ENCODE measurements at regions of chr16 and their contacts with region 1.

Region 1: DNA sequence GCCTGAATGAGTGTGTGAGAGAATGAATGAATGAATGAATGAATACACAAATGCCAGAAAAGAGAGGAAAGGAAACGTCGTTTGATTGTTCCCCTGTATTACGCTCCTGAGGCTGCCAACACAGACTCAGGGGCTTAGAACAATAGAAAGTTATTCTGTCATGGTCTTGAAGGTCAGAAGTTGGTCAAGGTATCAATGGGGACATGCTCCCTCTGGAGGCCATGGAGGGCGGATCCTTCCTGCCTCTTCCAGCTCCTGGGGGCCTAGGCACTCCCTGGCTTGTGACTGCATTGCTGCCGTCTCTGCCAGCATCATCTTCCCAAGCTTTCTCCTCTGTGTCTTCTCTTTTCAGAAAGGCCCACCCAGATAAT is 1.5 kb upstream of the SLC38A8 start:
- DNase-seq: no peak
- H3K4me3 Mint-ChIP-seq: no peak overlapping the region
- H3K27ac Mint-ChIP-seq: no peak overlapping the region
- H3K4me1 Mint-ChIP-seq: peaks cover 5% of the 10 kb centered on the region
- H3K27me3 Mint-ChIP-seq: peaks cover 24% of the 10 kb centered on the region

Region 2: DNA sequence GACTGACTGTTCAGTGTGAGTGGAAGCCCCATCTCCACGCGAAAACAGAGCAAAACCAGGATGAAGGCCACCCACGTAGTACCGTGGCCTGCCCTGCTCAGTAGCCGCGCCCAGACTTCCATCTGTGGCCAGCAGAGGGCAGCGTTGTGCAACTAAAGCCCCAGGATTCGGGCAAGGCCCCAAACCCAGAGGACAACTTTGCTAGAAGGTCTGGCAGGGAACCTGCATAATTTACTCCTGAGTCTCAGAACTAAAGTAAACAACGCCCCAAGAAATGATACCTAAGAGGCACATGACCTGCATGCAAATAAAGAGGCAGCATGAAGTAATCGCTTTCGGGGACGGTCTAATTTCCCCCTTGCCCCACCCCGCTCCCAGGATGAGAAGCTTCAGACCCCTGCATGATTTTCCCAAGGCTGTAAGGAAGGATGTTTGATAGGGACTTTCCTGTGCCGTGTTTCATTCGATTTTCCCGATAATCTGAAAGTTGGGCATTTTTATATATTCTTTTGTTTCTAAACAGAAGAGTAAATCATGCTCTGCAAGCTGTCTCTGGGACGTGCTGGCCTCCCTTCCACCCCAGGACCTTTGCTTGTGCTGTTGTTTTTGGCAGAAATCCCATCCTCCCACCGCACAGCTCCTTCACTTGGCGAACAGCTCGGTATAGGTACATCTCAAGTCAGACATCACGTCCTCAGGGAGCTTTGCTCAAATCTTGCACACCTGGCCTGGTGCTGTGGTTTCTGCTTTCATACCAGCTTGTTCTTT is 217.8 kb before region 1 on chr16:
- CTCF ChIA-PET with region 1: no interaction called
- intact Hi-C with region 1: loop called (anchors 5 kb)
- DNase-seq: peak; percentile 88
- H3K4me3 Mint-ChIP-seq: no peak overlapping the region
- H3K27ac Mint-ChIP-seq: no peak overlapping the region
- H3K4me1 Mint-ChIP-seq: peaks cover 3% of the 10 kb centered on the region
- H3K27me3 Mint-ChIP-seq: no peaks in the 10 kb centered on the region

Region 3: DNA sequence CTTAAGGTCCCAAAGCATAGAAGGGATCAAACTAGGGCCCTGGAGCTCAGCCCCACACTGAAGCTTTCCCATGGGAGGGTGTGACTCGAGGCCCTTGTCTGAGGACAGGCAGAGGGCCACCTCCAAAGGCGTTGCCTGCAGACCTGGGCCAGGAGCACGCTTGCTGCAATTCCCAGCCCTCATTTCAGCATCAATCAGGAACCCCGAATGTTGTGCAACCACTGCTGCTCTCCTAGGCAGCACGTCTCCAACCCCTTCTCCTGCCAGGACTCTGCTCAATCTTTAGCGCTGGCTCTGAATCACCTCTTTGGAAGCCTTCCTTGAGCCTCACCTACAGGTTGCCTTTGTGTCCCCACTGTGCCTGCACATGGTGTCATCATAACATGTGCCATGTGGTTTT is 310.2 kb after region 1 on chr16:
- CTCF ChIA-PET with region 1: no interaction called
- intact Hi-C with region 1: no loop called
- DNase-seq: no peak
- H3K4me3 Mint-ChIP-seq: no peak overlapping the region
- H3K27ac Mint-ChIP-seq: no peak overlapping the region
- H3K4me1 Mint-ChIP-seq: peaks cover 10% of the 10 kb centered on the region
- H3K27me3 Mint-ChIP-seq: no peaks in the 10 kb centered on the region